Activated CD8-positive, alpha-beta memory T cell treated with anti-CD3 and anti-CD28 coated beads, Interleukin-2, amount 10 ng/mL, durations not matched to agents 7 days and 5 days (primary cell): ENCODE measurements at regions of chr1 and their contacts with region 1.

Region 1: DNA sequence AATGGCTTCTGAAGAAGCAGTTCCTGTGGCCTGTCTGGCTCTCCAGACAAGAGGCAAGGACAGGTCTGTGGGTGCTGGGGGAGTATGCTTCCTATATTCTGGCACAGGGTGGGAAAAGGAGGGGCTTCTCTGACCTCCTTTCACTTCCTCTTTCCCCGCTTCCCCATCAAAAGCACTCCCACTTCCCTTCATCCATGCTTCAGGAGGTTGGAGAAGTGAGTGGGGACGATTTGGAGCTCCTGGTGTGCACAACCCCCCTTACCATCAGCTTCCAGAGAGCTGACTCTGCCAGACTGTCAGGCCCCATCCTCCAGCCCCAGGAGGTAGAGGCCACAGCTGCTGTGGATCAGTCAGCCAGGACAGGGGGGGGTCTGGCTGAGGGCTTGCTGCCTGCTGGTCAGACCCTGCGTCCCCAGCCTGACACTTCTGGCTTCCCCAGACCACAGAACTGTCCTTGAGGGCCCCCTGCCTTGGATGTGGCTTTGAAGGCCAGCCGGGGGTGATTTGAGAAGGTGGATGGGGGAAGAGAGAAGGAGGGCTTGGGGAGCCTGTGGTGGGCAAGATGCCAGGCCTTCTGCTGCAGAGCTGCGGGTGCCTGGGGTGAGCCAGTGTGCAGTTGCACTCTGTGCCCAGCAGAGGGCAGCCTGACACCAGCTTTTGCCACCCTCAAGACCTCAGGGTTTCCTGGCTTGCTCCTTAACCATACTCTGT is 21.5 kb upstream of the TMEM222 start:
- DNase-seq: peak; percentile 76
- ATAC-seq: peak; percentile 87
- H3K4me3 Mint-ChIP-seq: no peak overlapping the region
- H3K27ac Mint-ChIP-seq: no peak overlapping the region
- H3K4me1 Mint-ChIP-seq: peaks cover 6% of the 10 kb centered on the region
- H3K27me3 Mint-ChIP-seq: no peaks in the 10 kb centered on the region

Region 2: DNA sequence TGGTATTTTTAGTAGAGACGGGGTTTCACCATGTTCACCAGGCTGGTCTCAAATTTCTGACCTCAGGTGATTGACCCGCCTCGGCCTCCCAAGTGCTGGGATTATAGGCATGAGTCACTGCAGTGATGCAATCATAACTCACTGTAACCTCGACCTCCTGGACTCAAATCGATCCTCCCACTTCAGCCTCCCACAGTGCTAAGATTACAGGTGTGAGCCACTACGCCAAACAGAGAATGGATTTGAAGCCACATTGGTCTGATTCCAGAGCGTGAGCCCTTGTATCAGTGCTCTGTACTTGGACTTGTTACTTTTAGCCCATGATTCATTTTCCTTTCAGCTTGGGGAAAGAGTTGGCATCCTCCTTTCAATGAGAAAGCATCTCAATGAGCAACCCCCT is 913.0 kb before region 1 on chr1:
- CTCF ChIA-PET with region 1: no interaction called
- DNase-seq: no peak
- ATAC-seq: no peak
- H3K4me3 Mint-ChIP-seq: no peak overlapping the region
- H3K27ac Mint-ChIP-seq: peak overlapping the region; percentile 62
- H3K4me1 Mint-ChIP-seq: peaks cover 82% of the 10 kb centered on the region
- H3K27me3 Mint-ChIP-seq: no peaks in the 10 kb centered on the region

Region 3: GRCh38 chr1:26913754-26914619 is 386.5 kb before region 1 on chr1 and contains the start of gene NR0B2:
- CTCF ChIA-PET with region 1: no interaction called
- DNase-seq: no peak
- ATAC-seq: no peak
- H3K4me3 Mint-ChIP-seq: no peak within 1 kb of the TSS
- H3K27ac Mint-ChIP-seq: no peak within 1 kb of the TSS
- H3K4me1 Mint-ChIP-seq: no peaks in the 10 kb centered on the region
- H3K27me3 Mint-ChIP-seq: no peaks in the 10 kb centered on the region
- total RNA-seq, gene NR0B2: not detected

Region 4: GRCh38 chr1:27097484-27097917 is 203.0 kb before region 1 on chr1:
- CTCF ChIA-PET with region 1: interaction called, 34 read pairs
- DNase-seq: peak; percentile 85
- ATAC-seq: peak; percentile 87
- H3K4me3 Mint-ChIP-seq: no peak overlapping the region
- H3K27ac Mint-ChIP-seq: no peak overlapping the region
- H3K4me1 Mint-ChIP-seq: peaks cover 23% of the 10 kb centered on the region
- H3K27me3 Mint-ChIP-seq: no peaks in the 10 kb centered on the region

Region 5: DNA sequence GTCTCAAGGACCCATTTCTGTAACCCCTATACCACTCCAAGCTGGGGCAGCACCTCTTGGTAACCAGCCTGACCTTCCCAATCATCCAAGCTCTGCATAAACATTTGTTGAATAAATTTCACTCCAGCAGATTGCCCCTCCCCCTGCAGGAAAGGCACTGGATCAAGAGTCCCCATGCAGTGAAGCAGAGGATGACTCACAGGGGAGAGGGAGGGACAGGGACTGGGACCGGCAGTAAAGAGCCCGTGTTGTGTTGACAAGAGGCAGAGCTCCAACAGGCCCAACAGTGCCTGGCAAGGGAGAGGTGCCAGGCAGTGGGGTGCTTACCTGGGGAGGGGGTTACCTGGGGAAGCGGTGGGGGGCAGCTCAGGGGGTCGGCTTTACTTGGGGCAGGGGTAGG is 177.8 kb before region 1 on chr1:
- CTCF ChIA-PET with region 1: no interaction called
- DNase-seq: no peak
- ATAC-seq: no peak
- H3K4me3 Mint-ChIP-seq: no peak overlapping the region
- H3K27ac Mint-ChIP-seq: no peak overlapping the region
- H3K4me1 Mint-ChIP-seq: peaks cover 2% of the 10 kb centered on the region
- H3K27me3 Mint-ChIP-seq: no peaks in the 10 kb centered on the region

Region 6: GRCh38 chr1:27284425-27285273 is 15.8 kb before region 1 on chr1:
- CTCF ChIA-PET with region 1: interaction called, 21 read pairs
- DNase-seq: peak; percentile 92
- ATAC-seq: peak; percentile 97
- H3K4me3 Mint-ChIP-seq: no peak overlapping the region
- H3K27ac Mint-ChIP-seq: no peak overlapping the region
- H3K4me1 Mint-ChIP-seq: peaks cover 4% of the 10 kb centered on the region
- H3K27me3 Mint-ChIP-seq: no peaks in the 10 kb centered on the region

Region 7: GRCh38 chr1:27332536-27333281 is 32.2 kb after region 1 on chr1:
- CTCF ChIA-PET with region 1: interaction called, 36 read pairs
- DNase-seq: peak; percentile 61
- ATAC-seq: peak; percentile 77
- H3K4me3 Mint-ChIP-seq: no peak overlapping the region
- H3K27ac Mint-ChIP-seq: peak overlapping the region; percentile 57
- H3K4me1 Mint-ChIP-seq: peaks cover 20% of the 10 kb centered on the region
- H3K27me3 Mint-ChIP-seq: no peaks in the 10 kb centered on the region

Region 8: DNA sequence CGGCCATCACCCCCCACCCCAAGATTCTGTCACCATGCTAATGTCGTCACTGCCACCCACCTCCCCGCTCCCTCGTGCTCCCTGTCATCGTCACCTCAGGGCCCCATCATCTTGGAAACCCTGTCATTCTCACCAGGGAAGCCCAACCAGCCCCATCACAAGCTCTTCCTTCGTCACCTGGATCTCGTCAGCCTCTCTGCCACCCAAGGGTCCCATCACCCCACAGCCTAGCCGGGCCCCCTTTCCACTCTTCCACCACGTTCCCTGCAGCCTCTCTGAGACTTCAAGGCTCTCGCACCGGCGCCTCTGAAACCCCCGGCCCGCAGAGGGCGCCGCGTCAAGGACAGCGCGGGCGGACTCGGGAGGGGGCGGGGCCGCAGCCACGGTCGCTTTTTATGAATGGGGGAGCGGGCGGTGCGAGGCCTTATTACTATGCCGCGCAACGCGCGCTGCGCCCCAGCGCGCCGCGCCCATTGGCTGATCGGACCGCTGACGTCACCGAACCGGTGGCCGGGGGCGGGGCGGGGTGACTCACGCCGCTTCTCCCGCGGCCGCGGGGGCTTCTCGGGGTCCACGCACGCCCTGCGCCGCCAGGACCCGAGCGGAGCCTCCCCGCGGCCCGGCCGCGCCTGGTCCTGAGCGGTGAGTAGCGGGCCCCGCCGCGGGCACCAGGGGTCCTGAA is 91.7 kb after region 1 on chr1 and contains the start of gene GPR3:
- CTCF ChIA-PET with region 1: interaction called, 331 read pairs
- DNase-seq: peak; percentile 95
- ATAC-seq: peak; percentile 94
- H3K4me3 Mint-ChIP-seq: peak within 1 kb of the TSS; percentile 74
- H3K27ac Mint-ChIP-seq: peak within 1 kb of the TSS; percentile 76
- H3K4me1 Mint-ChIP-seq: peaks cover 8% of the 10 kb centered on the region
- H3K27me3 Mint-ChIP-seq: peaks cover 21% of the 10 kb centered on the region
- total RNA-seq, gene GPR3: 0.44 to 0.49 TPM